ENCODE measurements at regions of chr6 and their contacts with region 1.

Region 1: DNA sequence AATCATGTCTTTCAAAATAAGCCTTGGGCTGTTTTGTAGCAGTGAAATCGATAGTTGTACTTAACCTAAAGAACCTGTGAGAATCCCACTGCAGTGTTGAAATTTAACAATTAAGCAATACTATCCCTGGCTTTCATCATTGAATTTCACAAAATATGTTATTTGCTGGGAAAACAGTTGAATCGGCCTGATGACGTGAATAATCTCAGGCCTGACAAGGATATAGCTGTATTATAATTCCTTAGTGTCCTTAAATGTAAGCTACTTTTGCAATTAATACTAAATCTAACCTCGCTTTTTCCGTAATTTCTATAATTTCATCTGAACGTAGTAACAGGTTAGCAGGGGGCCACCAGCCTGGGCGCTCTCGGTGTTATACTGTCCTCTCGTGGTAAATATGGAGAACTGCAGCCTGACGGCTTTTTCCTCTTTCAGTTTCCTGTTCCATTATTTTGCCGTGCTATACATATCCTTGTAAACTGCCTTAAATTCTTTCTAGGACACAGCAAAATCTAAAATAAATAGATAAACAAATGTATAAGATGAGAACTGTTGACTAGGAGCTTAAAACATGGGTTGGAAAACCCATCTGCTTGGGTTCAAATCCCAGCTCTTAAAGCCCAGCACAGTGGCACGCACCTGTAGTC is 24.0 kb downstream of the MTFR2 start:
- DNase-seq: peak; percentile 75 to 83 (median 80)
- ATAC-seq: peak; percentile 85
- H3K4me3 ChIP-seq: no peak overlapping the region
- H3K27ac ChIP-seq: no peak overlapping the region
- H3K4me1 ChIP-seq: peaks cover 5 to 20% of the 10 kb centered on the region in 2 experiments; a peak in 4 of 5 replicates
- H3K27me3 ChIP-seq: no peaks in the 10 kb centered on the region
- CTCF ChIP-seq: peak; percentile 96 to 99 (median 99)
- EP300 ChIP-seq: no peak
- POLR2A ChIP-seq: no peak
- RAD21 ChIP-seq: peak; percentile 99

Region 2: GRCh38 chr6:135451693-135452092 is 774.5 kb before region 1 on chr6:
- CTCF ChIA-PET with region 1: interaction called, 19 read pairs
- POLR2A ChIA-PET with region 1: no interaction called
- in situ Hi-C with region 1: loop called (anchors 10 kb)
- intact Hi-C with region 1: loop called (anchors 1 kb)
- DNase-seq: peak in 3 of 4 experiments; percentile 20 to 47 (median 31)
- ATAC-seq: peak; percentile 50
- H3K4me3 ChIP-seq: no peak overlapping the region
- H3K27ac ChIP-seq: no peak overlapping the region
- H3K4me1 ChIP-seq: no peaks in the 10 kb centered on the region
- H3K27me3 ChIP-seq: no peaks in the 10 kb centered on the region
- CTCF ChIP-seq: peak; percentile 55 to 81 (median 62); a peak in 5 of 6 replicates
- EP300 ChIP-seq: no peak
- POLR2A ChIP-seq: no peak
- RAD21 ChIP-seq: peak; percentile 50 to 66

Region 3: GRCh38 chr6:135535989-135536414 is 690.1 kb before region 1 on chr6:
- CTCF ChIA-PET with region 1: interaction called, 6 read pairs
- POLR2A ChIA-PET with region 1: no interaction called
- in situ Hi-C with region 1: loop called (anchors 10 kb)
- intact Hi-C with region 1: loop called (anchors 1 kb)
- DNase-seq: peak; percentile 29 to 53 (median 43)
- ATAC-seq: peak; percentile 81
- H3K4me3 ChIP-seq: no peak overlapping the region
- H3K27ac ChIP-seq: no peak overlapping the region
- H3K4me1 ChIP-seq: no peaks in the 10 kb centered on the region
- H3K27me3 ChIP-seq: no peaks in the 10 kb centered on the region
- CTCF ChIP-seq: peak; percentile 57 to 85 (median 73); a peak in 5 of 6 replicates
- EP300 ChIP-seq: no peak
- POLR2A ChIP-seq: no peak
- RAD21 ChIP-seq: peak; percentile 86 to 89

Region 4: GRCh38 chr6:135861189-135861588 is 365.0 kb before region 1 on chr6:
- CTCF ChIA-PET with region 1: no interaction called
- POLR2A ChIA-PET with region 1: no interaction called
- in situ Hi-C with region 1: no loop called
- intact Hi-C with region 1: no loop called
- DNase-seq: no peak
- ATAC-seq: no peak
- H3K4me3 ChIP-seq: no peak overlapping the region
- H3K27ac ChIP-seq: no peak overlapping the region
- H3K4me1 ChIP-seq: no peaks in the 10 kb centered on the region
- H3K27me3 ChIP-seq: no peaks in the 10 kb centered on the region
- CTCF ChIP-seq: no peak
- EP300 ChIP-seq: no peak
- POLR2A ChIP-seq: no peak
- RAD21 ChIP-seq: no peak

Region 5: GRCh38 chr6:135938576-135939207 is 287.5 kb before region 1 on chr6:
- CTCF ChIA-PET with region 1: no interaction called
- POLR2A ChIA-PET with region 1: no interaction called
- in situ Hi-C with region 1: no loop called
- intact Hi-C with region 1: loop called (anchors 10 kb)
- DNase-seq: peak in 2 of 4 experiments; percentile 28 to 32
- ATAC-seq: peak; percentile 91
- H3K4me3 ChIP-seq: no peak overlapping the region
- H3K27ac ChIP-seq: no peak overlapping the region
- H3K4me1 ChIP-seq: no peaks in the 10 kb centered on the region
- H3K27me3 ChIP-seq: no peaks in the 10 kb centered on the region; a peak in 1 of 5 replicates
- CTCF ChIP-seq: peak; percentile 30 to 52 (median 42); a peak in 4 of 6 replicates
- EP300 ChIP-seq: no peak
- POLR2A ChIP-seq: no peak
- RAD21 ChIP-seq: peak; percentile 39 to 53; a peak in 3 of 4 replicates

Region 6: DNA sequence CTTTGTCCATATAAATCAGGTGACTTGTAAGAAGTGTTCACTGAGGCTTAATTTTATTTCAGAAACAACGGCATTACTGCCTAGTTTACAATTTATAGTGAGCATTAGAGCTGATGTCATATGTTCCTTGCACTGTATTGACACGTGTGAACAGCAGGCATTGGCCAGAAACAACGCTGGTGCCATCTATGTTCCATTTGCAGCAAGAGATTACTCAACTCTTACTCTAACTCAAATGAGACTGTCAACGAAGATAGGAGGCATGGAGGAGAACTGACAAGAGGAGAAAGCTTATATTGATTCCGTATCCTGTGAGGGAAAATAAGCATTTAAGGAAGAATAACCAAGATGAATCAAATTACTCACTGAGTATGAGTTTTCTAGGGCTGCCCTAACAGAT is 24.4 kb before region 1 on chr6:
- CTCF ChIA-PET with region 1: no interaction called
- POLR2A ChIA-PET with region 1: no interaction called
- in situ Hi-C with region 1: no loop called
- intact Hi-C with region 1: loop called (anchors 1 kb)
- DNase-seq: no peak
- ATAC-seq: no peak
- H3K4me3 ChIP-seq: no peak overlapping the region
- H3K27ac ChIP-seq: no peak overlapping the region
- H3K4me1 ChIP-seq: no peaks in the 10 kb centered on the region
- H3K27me3 ChIP-seq: peaks cover 5 to 14% of the 10 kb centered on the region in 2 experiments; a peak in 3 of 5 replicates
- CTCF ChIP-seq: no peak
- EP300 ChIP-seq: no peak
- POLR2A ChIP-seq: no peak
- RAD21 ChIP-seq: 0 out of 4 replicates have a peak, but pooled peaks of 1 of the 2 experiments have one; percentile 3

Region 7: GRCh38 chr6:136289579-136290409 is 63.6 kb after region 1 on chr6 and contains the start of gene BCLAF1:
- CTCF ChIA-PET with region 1: no interaction called
- POLR2A ChIA-PET with region 1: interaction called, 19 read pairs
- in situ Hi-C with region 1: no loop called
- intact Hi-C with region 1: no loop called
- DNase-seq: peak; percentile 95 to 100 (median 96)
- ATAC-seq: peak; percentile 93
- H3K4me3 ChIP-seq: peak within 1 kb of the TSS; percentile 75
- H3K27ac ChIP-seq: peak within 1 kb of the TSS; percentile 100
- H3K4me1 ChIP-seq: peaks cover 13 to 14% of the 10 kb centered on the region in 2 experiments
- H3K27me3 ChIP-seq: no peaks in the 10 kb centered on the region
- CTCF ChIP-seq: no peak
- EP300 ChIP-seq: peak; percentile 37; the same call in 1 of the 2 replicates
- POLR2A ChIP-seq: peak; percentile 99
- RAD21 ChIP-seq: peak in 1 of 2 experiments; percentile 30; a peak in 1 of 4 replicates
- polyA plus RNA-seq, gene BCLAF1: 65.4 to 87.3 TPM

Measured in K562 (cell line).